Psoas muscle (tissue), 8 donors: ENCODE measurements at regions of chr3 and their contacts with region 1.

Region 1: GRCh38 chr3:152444029-152444641 is 175.4 kb downstream of the MBNL1 start:
- DNase-seq: no peak
- ATAC-seq: peak in 3 of 4 donors; percentile 53 to 74 (median 68)
- H3K4me3 ChIP-seq: peak overlapping the region; percentile 26
- H3K27ac ChIP-seq: peak overlapping the region; percentile 57
- H3K4me1 ChIP-seq: peaks cover 73% of the 10 kb centered on the region
- H3K27me3 ChIP-seq: no peaks in the 10 kb centered on the region
- CTCF ChIP-seq: peak; percentile 71

Region 2: GRCh38 chr3:152071924-152072323 is 372.2 kb before region 1 on chr3:
- intact Hi-C with region 1: loop called in 1 of 2 experiments (anchors 10 kb)
- DNase-seq: no peak
- ATAC-seq: peak; percentile 62 to 92 (median 72)
- H3K4me3 ChIP-seq: no peak overlapping the region
- H3K27ac ChIP-seq: no peak overlapping the region
- H3K4me1 ChIP-seq: peaks cover 10% of the 10 kb centered on the region
- H3K27me3 ChIP-seq: no peaks in the 10 kb centered on the region
- CTCF ChIP-seq: peak; percentile 58

Region 3: DNA sequence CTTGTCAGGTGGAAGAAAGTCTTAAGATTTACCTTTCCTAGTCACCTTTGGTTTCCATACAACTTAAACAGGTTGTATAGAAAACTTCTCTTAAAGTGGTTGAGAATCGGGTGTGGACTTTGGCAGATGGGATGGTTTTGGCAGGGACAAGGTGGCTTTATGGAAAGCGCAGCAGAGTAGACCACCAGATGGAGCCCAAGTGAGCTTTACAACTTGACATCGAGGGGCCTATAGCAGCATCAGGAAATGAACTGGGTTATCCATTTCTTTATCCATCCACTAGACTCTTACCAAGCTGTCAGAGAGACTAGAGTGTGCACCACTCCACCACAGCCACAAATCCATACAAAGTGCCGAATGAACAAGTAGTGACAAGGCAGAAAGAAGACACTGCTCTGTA is 260.7 kb before region 1 on chr3:
- intact Hi-C with region 1: loop called (anchors 1 to 10 kb)
- DNase-seq: peak in 1 of 2 donors; percentile 48
- ATAC-seq: peak; percentile 74 to 97 (median 81)
- H3K4me3 ChIP-seq: no peak overlapping the region
- H3K27ac ChIP-seq: no peak overlapping the region
- H3K4me1 ChIP-seq: no peaks in the 10 kb centered on the region
- H3K27me3 ChIP-seq: no peaks in the 10 kb centered on the region
- CTCF ChIP-seq: peak; percentile 65

Region 4: DNA sequence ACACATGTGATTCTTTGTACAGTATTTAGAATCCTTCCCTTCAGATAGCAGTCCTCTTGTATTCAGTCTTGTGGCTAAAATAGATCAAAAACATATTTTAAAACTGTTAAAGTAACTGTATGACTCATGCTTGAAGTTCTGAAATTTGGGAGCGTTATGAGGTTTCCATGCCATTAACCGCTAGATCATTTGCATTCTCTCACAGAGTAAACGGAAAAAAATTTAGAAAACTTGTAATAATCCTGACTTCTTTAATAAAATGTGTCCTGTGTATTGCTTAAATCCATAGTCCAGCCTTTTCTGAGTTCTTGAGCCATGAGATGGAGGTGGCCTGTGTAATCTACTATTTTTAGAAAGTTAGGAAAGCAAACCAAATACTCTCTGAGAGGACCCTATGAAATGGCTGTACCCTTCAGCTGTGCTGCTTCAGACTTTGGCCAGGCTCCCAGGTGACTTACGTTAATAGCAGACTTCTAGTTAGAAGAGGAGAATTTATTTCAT is 141.6 kb before region 1 on chr3:
- intact Hi-C with region 1: loop called (anchors 5 to 10 kb)
- DNase-seq: peak; percentile 40 to 70
- ATAC-seq: peak; percentile 70 to 82 (median 76)
- H3K4me3 ChIP-seq: peak overlapping the region; percentile 70
- H3K27ac ChIP-seq: peak overlapping the region; percentile 94
- H3K4me1 ChIP-seq: peaks cover 54% of the 10 kb centered on the region
- H3K27me3 ChIP-seq: no peaks in the 10 kb centered on the region
- CTCF ChIP-seq: no peak

Region 5: GRCh38 chr3:152309535-152310307 is 134.4 kb before region 1 on chr3:
- intact Hi-C with region 1: loop called (anchors 5 to 10 kb)
- DNase-seq: no peak
- ATAC-seq: peak in 1 of 4 donors; percentile 31
- H3K4me3 ChIP-seq: peak overlapping the region; percentile 70
- H3K27ac ChIP-seq: peak overlapping the region; percentile 94
- H3K4me1 ChIP-seq: peaks cover 83% of the 10 kb centered on the region
- H3K27me3 ChIP-seq: no peaks in the 10 kb centered on the region
- CTCF ChIP-seq: no peak

Region 6: DNA sequence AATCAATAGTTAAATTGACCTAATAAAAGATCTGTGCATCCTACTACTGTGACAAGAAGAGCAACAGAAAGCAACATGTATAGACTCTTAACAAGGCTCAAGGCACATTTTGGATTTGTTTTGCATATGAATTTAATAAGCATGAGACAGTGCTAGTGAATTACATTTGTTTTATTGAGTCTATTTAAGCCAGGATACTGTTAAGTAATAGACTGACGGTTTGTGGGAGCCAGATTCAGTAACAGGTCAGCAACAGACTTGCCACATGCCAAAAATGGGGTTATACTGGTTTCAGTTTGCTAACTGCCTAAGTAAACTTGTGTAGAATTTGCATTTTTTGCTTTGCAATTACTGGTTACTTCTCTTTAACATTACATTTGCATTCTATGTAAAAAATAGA is 121.4 kb before region 1 on chr3:
- intact Hi-C with region 1: no loop called
- DNase-seq: no peak
- ATAC-seq: peak; percentile 27 to 62 (median 42)
- H3K4me3 ChIP-seq: peak overlapping the region; percentile 44
- H3K27ac ChIP-seq: peak overlapping the region; percentile 78
- H3K4me1 ChIP-seq: peaks cover 82% of the 10 kb centered on the region
- H3K27me3 ChIP-seq: no peaks in the 10 kb centered on the region
- CTCF ChIP-seq: no peak